ENCODE measurements at regions of chr9 and their contacts with region 1.

Region 1: GRCh38 chr9:13841746-13842462 is 472.0 kb downstream of the NFIB start:
- DNase-seq: no peak
- H3K4me3 ChIP-seq: no peak overlapping the region
- H3K27ac ChIP-seq: no peak overlapping the region
- H3K4me1 ChIP-seq: no peaks in the 10 kb centered on the region
- H3K27me3 ChIP-seq: no peaks in the 10 kb centered on the region
- CTCF ChIP-seq: no peak

Region 2: GRCh38 chr9:13707612-13708576 is 134.0 kb before region 1 on chr9:
- CTCF ChIA-PET with region 1: no interaction called
- POLR2A ChIA-PET with region 1: no interaction called
- intact Hi-C with region 1: no loop called
- DNase-seq: no peak
- H3K4me3 ChIP-seq: no peak overlapping the region
- H3K27ac ChIP-seq: no peak overlapping the region
- H3K4me1 ChIP-seq: peaks cover 9% of the 10 kb centered on the region
- H3K27me3 ChIP-seq: no peaks in the 10 kb centered on the region
- CTCF ChIP-seq: no peak

Region 3: DNA sequence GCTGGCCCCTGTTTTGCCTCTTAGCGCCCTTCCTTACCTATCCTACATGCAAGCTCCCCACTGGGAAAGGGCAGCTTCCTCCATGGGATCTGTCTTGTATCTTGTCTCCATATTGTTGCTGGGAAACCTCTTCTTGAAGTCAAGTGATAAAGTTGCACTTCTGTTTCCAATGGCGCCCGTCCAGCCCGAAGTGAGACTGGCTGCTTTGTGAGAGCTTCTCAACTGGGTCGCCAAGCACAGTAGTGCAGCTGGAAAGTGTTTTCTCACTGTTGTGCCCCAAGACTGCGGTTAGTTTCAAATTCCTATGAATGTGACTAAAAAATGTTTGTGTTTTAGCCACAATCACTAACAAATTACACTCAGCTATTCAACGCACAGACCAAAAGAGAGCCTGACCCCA is 55.8 kb before region 1 on chr9:
- CTCF ChIA-PET with region 1: no interaction called
- POLR2A ChIA-PET with region 1: interaction called, 10 read pairs
- intact Hi-C with region 1: no loop called
- DNase-seq: no peak
- H3K4me3 ChIP-seq: no peak overlapping the region
- H3K27ac ChIP-seq: no peak overlapping the region
- H3K4me1 ChIP-seq: no peaks in the 10 kb centered on the region
- H3K27me3 ChIP-seq: no peaks in the 10 kb centered on the region
- CTCF ChIP-seq: no peak

Region 4: GRCh38 chr9:13810510-13810909 is 31.4 kb before region 1 on chr9:
- CTCF ChIA-PET with region 1: no interaction called
- POLR2A ChIA-PET with region 1: no interaction called
- intact Hi-C with region 1: no loop called
- DNase-seq: no peak
- H3K4me3 ChIP-seq: no peak overlapping the region
- H3K27ac ChIP-seq: no peak overlapping the region
- H3K4me1 ChIP-seq: no peaks in the 10 kb centered on the region
- H3K27me3 ChIP-seq: no peaks in the 10 kb centered on the region
- CTCF ChIP-seq: no peak

Region 5: GRCh38 chr9:13915591-13916326 is 73.9 kb after region 1 on chr9:
- CTCF ChIA-PET with region 1: no interaction called
- POLR2A ChIA-PET with region 1: no interaction called
- intact Hi-C with region 1: no loop called
- DNase-seq: no peak
- H3K4me3 ChIP-seq: no peak overlapping the region
- H3K27ac ChIP-seq: no peak overlapping the region
- H3K4me1 ChIP-seq: no peaks in the 10 kb centered on the region
- H3K27me3 ChIP-seq: no peaks in the 10 kb centered on the region
- CTCF ChIP-seq: no peak

Region 6: GRCh38 chr9:14006386-14007187 is 164.7 kb after region 1 on chr9:
- CTCF ChIA-PET with region 1: no interaction called
- POLR2A ChIA-PET with region 1: no interaction called
- intact Hi-C with region 1: no loop called
- DNase-seq: no peak
- H3K4me3 ChIP-seq: no peak overlapping the region
- H3K27ac ChIP-seq: no peak overlapping the region
- H3K4me1 ChIP-seq: no peaks in the 10 kb centered on the region
- H3K27me3 ChIP-seq: no peaks in the 10 kb centered on the region
- CTCF ChIP-seq: no peak